Natural killer cell (primary cell): ENCODE measurements at regions of chr4 and their contacts with region 1.

Region 1: DNA sequence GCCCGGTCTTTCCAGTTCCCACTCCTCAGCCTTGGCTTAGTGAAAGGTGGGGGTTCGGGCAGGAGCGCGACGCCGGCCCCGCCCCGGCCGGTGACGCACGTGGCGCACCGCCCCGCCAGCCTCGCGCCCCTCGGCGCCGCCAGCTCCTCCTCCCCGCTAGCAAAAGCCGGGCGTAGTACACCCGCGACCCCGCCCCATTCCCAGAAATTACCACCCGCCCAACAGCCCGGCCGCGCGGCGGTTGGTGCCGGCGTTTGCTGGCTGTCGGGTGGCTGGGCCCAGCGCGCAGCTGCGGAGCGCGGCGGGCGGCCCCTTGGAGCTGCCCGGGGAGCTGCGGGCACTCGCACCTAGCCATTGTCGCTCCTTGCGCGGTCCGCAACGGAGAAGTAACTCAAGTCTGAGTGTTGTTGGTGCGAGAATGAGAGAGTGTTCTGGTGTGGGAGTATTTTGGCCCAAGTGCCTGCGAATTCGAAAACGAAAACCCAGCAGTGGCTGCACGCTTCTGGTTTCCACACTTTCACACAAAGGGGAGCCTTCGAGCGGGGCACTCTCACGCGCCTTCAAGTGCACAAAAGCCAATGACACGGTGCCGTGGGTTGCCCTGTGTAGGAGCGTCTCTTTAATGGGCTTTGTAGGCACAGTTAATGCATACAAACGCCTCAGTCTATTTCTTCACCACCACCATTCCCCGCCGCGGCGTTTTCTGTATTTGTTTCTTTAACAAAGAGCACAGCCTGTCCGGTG is 1.0 kb upstream of the ELF2 start:
- DNase-seq: peak; percentile 81 to 94
- ATAC-seq: peak; percentile 64 to 85 (median 73)
- H3K4me3 ChIP-seq: peak overlapping the region; percentile 64
- H3K4me3 Mint-ChIP-seq: peak overlapping the region; percentile 94
- H3K27ac ChIP-seq: peak overlapping the region; percentile 89
- H3K27ac Mint-ChIP-seq: peak overlapping the region; percentile 89 to 93
- H3K4me1 ChIP-seq: peaks cover 15% of the 10 kb centered on the region
- H3K4me1 Mint-ChIP-seq: peaks cover 16 to 17% of the 10 kb centered on the region in 2 donors
- H3K27me3 ChIP-seq: no peaks in the 10 kb centered on the region
- H3K27me3 Mint-ChIP-seq: no peaks in the 10 kb centered on the region
- CTCF ChIP-seq: no peak

Region 2: DNA sequence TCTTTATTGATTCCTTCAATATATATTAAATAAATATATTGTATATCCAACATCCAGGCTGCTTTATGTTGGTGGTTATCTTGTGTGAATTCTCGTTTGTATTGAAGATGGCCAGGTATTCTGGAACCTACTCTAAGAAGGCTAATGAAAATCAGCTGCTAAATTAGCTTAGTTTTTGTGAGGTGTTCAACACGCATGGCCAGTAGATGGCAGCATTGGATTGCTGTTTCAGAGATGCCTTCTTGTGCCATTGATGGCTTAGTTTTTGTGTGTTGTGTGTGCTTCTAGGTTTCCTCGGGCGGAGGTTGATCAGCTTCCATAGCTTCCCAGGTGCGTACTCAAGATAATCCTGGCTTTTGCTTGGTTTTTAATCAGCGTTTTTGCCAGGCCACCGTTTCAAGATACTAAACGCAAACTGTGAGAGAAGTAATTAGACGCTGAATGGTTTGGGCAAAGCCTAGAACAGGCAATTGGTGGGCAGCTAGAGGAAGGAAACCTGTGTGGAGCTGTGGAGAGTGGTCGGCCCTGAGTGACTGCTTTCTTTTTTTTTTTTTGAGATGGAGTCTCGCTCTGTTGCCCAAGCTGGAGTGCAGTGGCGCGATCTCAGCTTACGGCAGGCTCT is 147.3 kb before region 1 on chr4:
- intact Hi-C with region 1: loop called (anchors 5 kb)
- DNase-seq: peak; percentile 60 to 92
- ATAC-seq: peak; percentile 70 to 94 (median 82)
- H3K4me3 ChIP-seq: no peak overlapping the region
- H3K4me3 Mint-ChIP-seq: no peak overlapping the region
- H3K27ac ChIP-seq: no peak overlapping the region
- H3K27ac Mint-ChIP-seq: peak overlapping the region; percentile 39 to 73
- H3K4me1 ChIP-seq: peaks cover 5% of the 10 kb centered on the region
- H3K4me1 Mint-ChIP-seq: peaks cover 17 to 25% of the 10 kb centered on the region in 2 donors
- H3K27me3 ChIP-seq: no peaks in the 10 kb centered on the region
- H3K27me3 Mint-ChIP-seq: no peaks in the 10 kb centered on the region
- CTCF ChIP-seq: peak; percentile 84

Region 3: GRCh38 chr4:139266583-139267257 is 88.7 kb after region 1 on chr4:
- intact Hi-C with region 1: loop called (anchors 1 kb)
- DNase-seq: peak; percentile 66 to 85
- ATAC-seq: peak; percentile 93 to 99 (median 95)
- H3K4me3 ChIP-seq: peak overlapping the region; percentile 39
- H3K4me3 Mint-ChIP-seq: peak overlapping the region; percentile 91
- H3K27ac ChIP-seq: peak overlapping the region; percentile 87
- H3K27ac Mint-ChIP-seq: peak overlapping the region; percentile 92 to 95
- H3K4me1 ChIP-seq: peaks cover 7% of the 10 kb centered on the region
- H3K4me1 Mint-ChIP-seq: peaks cover 18 to 22% of the 10 kb centered on the region in 2 donors
- H3K27me3 ChIP-seq: no peaks in the 10 kb centered on the region
- H3K27me3 Mint-ChIP-seq: no peaks in the 10 kb centered on the region
- CTCF ChIP-seq: no peak

Region 4: DNA sequence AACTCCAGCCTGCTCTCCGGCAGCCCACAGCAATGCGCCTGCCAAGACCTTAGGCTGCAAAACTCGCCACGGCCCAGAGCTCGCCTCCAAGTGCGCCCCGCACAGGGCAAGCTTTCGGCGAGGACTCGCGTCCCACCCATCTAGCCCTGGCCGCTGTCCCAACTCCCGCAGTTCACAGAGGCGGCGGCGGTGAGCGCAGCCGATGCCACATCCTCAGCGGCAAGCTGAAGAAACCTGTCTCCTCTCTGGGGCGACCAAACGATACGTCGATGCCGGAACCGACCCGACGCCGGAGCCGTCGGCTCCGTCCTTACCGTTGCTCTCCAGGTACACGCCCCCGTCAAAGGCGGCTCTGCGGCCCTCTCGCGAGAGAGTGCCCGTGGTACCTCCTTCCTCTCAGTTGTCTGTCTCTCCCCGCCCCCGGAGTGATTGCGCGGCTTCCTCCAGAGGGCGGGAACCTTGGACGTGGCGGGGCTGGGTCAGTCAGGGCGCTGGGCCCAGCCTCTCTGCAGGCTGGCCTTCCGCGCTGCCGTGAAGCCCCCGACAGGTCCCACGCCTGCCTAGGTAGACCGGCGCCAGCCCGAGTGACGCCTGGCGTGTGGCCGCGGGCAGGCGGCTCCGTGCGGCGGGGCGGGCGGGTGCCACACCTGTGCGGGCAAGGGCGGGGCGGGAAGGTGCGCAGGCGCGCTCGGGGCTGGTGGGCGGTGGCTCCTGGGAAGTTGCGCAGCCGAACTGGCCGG is 275.5 kb after region 1 on chr4:
- intact Hi-C with region 1: loop called (anchors 2 kb)
- DNase-seq: peak; percentile 91 to 97
- ATAC-seq: peak; percentile 89 to 96 (median 91)
- H3K4me3 ChIP-seq: peak overlapping the region; percentile 80
- H3K4me3 Mint-ChIP-seq: peak overlapping the region; percentile 99
- H3K27ac ChIP-seq: peak overlapping the region; percentile 89
- H3K27ac Mint-ChIP-seq: peak overlapping the region; percentile 99
- H3K4me1 ChIP-seq: peaks cover 20% of the 10 kb centered on the region
- H3K4me1 Mint-ChIP-seq: peaks cover 62% of the 10 kb centered on the region in 2 donors
- H3K27me3 ChIP-seq: no peaks in the 10 kb centered on the region
- H3K27me3 Mint-ChIP-seq: no peaks in the 10 kb centered on the region
- CTCF ChIP-seq: no peak